Activated naive CD4-positive, alpha-beta T cell treated with anti-CD3 and anti-CD28 coated beads for 36 hours (primary cell): ENCODE measurements at regions of chr7 and their contacts with region 1.

Region 1: GRCh38 chr7:106485031-106485551 is 175.9 kb downstream of the CCDC71L start:
- DNase-seq: peak; percentile 26
- H3K4me3 Mint-ChIP-seq: no peak overlapping the region
- H3K27ac Mint-ChIP-seq: peak overlapping the region; percentile 81
- H3K4me1 Mint-ChIP-seq: peaks cover 57% of the 10 kb centered on the region
- H3K27me3 Mint-ChIP-seq: peaks cover 23% of the 10 kb centered on the region

Region 2: GRCh38 chr7:105782391-105783042 is 702.6 kb before region 1 on chr7:
- CTCF ChIA-PET with region 1: no interaction called
- intact Hi-C with region 1: no loop called
- DNase-seq: peak; percentile 57
- H3K4me3 Mint-ChIP-seq: no peak overlapping the region
- H3K27ac Mint-ChIP-seq: no peak overlapping the region
- H3K4me1 Mint-ChIP-seq: peaks cover 20% of the 10 kb centered on the region
- H3K27me3 Mint-ChIP-seq: peaks cover 2% of the 10 kb centered on the region

Region 3: DNA sequence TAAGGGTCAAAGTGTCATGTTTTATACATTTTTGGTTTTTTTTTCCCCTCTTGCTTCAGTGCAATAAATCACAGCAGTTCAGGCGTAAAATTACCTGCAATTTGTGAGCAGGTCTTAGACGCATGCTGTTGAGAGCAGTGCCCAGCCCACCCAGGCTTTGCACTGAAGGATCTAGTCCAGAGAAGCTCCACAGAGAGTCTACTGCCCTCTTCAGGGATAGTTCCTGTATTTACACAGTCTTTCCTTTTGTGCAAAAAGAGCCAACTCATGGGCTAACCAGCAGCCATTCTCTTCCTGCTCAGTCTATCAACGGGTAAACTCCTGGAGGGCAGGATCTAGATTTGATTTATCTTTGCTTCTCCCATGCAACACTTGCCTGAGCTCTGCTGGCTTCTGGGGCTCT is 118.1 kb before region 1 on chr7:
- CTCF ChIA-PET with region 1: no interaction called
- intact Hi-C with region 1: loop called (anchors 1 kb)
- DNase-seq: no peak
- H3K4me3 Mint-ChIP-seq: no peak overlapping the region
- H3K27ac Mint-ChIP-seq: peak overlapping the region; percentile 70
- H3K4me1 Mint-ChIP-seq: peaks cover 44% of the 10 kb centered on the region
- H3K27me3 Mint-ChIP-seq: peaks cover 23% of the 10 kb centered on the region

Region 4: GRCh38 chr7:106405697-106406141 is 79.4 kb before region 1 on chr7:
- CTCF ChIA-PET with region 1: no interaction called
- intact Hi-C with region 1: loop called (anchors 1 kb)
- DNase-seq: peak; percentile 53
- H3K4me3 Mint-ChIP-seq: no peak overlapping the region
- H3K27ac Mint-ChIP-seq: peak overlapping the region; percentile 50
- H3K4me1 Mint-ChIP-seq: peaks cover 32% of the 10 kb centered on the region
- H3K27me3 Mint-ChIP-seq: peaks cover 44% of the 10 kb centered on the region

Region 5: GRCh38 chr7:106461993-106462859 is 22.9 kb before region 1 on chr7:
- CTCF ChIA-PET with region 1: interaction called, 4 read pairs
- intact Hi-C with region 1: loop called (anchors 2 kb)
- DNase-seq: peak; percentile 29
- H3K4me3 Mint-ChIP-seq: no peak overlapping the region
- H3K27ac Mint-ChIP-seq: peak overlapping the region; percentile 50
- H3K4me1 Mint-ChIP-seq: peaks cover 29% of the 10 kb centered on the region
- H3K27me3 Mint-ChIP-seq: no peaks in the 10 kb centered on the region

Region 6: DNA sequence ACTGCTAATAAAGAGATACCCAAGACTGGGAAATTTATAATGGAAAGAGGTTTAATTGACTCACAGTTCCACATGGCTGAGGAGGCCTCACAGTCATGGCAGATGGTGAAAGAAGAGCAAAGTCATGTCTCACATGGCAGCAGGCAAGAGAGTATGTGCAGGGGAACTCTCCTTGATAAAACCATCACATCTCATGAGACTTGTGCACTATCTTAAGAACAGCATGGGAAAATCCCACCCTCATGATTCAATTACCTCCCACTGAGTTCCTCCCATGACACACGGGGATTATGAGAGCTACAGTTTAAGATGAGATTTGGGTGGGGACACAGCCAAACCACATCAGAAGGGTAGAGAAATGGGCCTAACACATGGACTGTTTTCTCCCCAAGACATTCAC is 19.6 kb after region 1 on chr7:
- CTCF ChIA-PET with region 1: interaction called, 3 read pairs
- intact Hi-C with region 1: loop called (anchors 1 kb)
- DNase-seq: peak; percentile 44
- H3K4me3 Mint-ChIP-seq: peak overlapping the region; percentile 10
- H3K27ac Mint-ChIP-seq: peak overlapping the region; percentile 79
- H3K4me1 Mint-ChIP-seq: peaks cover 24% of the 10 kb centered on the region
- H3K27me3 Mint-ChIP-seq: peaks cover 4% of the 10 kb centered on the region

Region 7: GRCh38 chr7:106717955-106718871 is 233.1 kb after region 1 on chr7:
- CTCF ChIA-PET with region 1: no interaction called
- intact Hi-C with region 1: loop called (anchors 1 kb)
- DNase-seq: peak; percentile 92
- H3K4me3 Mint-ChIP-seq: no peak overlapping the region
- H3K27ac Mint-ChIP-seq: no peak overlapping the region
- H3K4me1 Mint-ChIP-seq: peaks cover 10% of the 10 kb centered on the region
- H3K27me3 Mint-ChIP-seq: no peaks in the 10 kb centered on the region

Region 8: DNA sequence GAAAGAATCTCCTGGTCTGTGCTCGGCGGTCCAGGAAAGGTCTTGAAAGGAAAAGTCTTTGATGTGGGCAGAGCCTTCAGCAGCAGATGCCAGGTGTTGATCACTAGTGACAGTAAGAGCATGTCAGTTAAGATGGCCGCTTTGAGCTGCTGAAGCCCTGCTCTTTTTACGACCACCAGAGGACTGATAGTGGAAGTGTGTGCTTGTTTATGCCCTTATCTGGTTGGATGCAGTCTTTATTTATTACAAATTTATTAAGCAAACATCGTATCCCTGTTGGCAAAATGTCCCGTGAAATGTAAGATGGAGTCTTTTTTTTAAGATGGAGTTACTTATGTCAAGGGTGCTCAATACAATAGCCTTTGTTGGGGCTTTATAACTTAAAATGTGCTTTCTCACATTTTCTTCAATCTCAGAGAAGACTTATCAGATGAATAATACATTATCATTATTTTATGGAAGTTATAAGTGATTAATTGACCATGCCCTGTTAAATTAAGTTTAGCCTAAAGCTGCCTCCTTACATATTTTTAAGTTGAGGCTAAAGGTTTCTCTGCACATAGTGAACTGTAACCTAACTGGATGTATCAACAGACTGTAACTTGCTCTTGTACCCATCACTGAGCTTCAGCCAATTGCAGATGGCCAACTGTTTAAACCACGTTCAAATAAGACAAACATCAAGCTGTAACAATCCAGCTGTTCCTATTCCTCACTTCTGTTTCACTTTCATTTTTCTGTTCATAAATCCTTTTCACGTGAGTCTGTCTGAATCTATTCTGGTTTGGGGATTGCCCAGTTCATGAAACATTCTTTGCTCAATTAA is 282.6 kb after region 1 on chr7:
- CTCF ChIA-PET with region 1: no interaction called
- intact Hi-C with region 1: loop called (anchors 1 kb)
- DNase-seq: peak; percentile 25
- H3K4me3 Mint-ChIP-seq: peak overlapping the region; percentile 20
- H3K27ac Mint-ChIP-seq: peak overlapping the region; percentile 13
- H3K4me1 Mint-ChIP-seq: peaks cover 43% of the 10 kb centered on the region
- H3K27me3 Mint-ChIP-seq: no peaks in the 10 kb centered on the region